Left colon (tissue), 2 donors: ENCODE measurements at regions of chr2 and their contacts with region 1.

Region 1: GRCh38 chr2:173578404-173579107 is 223.9 kb downstream of the CDCA7 start:
- DNase-seq: no peak
- ATAC-seq: no peak

Region 2: DNA sequence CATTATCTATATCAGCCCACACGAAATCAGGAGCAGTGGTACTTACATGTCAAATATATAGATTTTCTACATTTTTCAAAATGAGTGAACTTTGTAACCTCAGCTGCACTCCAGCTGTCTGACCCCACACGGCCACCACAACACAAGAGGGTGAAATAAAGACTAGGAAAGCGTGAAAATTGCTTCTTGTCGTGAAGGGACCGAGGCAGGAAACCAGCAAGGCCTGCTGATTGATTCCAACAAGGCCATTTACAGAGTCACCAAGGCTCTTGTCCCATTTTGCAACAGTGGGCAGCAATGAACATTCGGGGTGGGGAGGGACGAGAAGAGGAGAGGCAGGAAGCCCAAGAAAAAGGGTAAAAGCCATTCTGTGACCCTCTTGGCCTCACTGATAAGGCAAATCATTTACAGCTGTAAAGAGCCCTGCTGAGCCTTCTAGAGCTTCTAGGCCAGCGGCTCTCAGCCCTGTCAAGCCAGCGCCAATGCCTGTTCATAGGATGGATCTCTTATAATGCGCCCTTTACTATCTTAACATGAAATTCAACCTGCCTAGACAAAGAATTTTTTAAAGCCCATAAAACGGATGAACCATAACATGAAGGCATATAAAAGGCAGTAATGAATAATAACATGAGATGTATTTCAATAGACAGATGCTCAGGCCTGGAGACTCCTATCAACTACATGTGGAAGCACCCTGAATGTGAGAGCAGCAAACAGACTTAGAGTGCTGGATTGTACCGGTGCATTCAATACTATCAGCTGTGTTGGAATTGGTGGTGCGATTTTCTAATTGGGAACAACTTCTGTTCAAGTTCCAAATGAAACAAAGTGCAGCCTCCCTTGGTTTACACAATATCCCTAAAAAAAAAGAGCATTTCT is 45.1 kb after region 1 on chr2:
- intact Hi-C with region 1: loop called in 1 of 2 experiments (anchors 2 kb)
- DNase-seq: no peak
- ATAC-seq: no peak

Region 3: GRCh38 chr2:173955004-173955403 is 376.4 kb after region 1 on chr2:
- intact Hi-C with region 1: no loop called
- DNase-seq: no peak
- ATAC-seq: no peak